Gastrocnemius medialis (tissue), 4 donors: ENCODE measurements at regions of chrX and their contacts with region 1.

Region 1: GRCh38 chrX:87873347-87873941 is 355.8 kb downstream of the KLHL4 start:
- DNase-seq: no peak
- ATAC-seq: no peak
- H3K4me3 ChIP-seq: no peak overlapping the region
- H3K27ac ChIP-seq: no peak overlapping the region
- H3K4me1 ChIP-seq: no peaks in the 10 kb centered on the region
- H3K27me3 ChIP-seq: no peaks in the 10 kb centered on the region
- CTCF ChIP-seq: no peak
- POLR2A ChIP-seq: no peak

Region 2: DNA sequence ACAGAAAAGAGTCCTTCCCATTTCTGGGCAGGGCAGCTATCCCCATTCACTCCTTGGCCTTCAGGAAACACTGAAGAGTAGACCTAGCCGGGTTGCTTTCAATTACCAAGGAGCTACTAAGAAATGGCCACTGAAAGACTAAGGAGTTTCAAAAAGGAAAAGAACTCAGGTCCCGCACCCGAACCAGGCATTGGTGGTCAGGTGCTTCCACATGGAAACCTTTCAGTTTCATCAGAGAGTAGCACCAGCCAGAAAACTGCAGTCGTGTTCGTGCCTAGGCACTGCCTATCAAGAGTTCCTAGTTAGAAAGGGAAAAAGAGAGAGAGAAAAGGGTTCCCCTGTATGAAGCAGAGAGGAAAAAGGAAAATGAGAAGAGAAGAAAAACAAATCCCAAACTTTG is 118.0 kb before region 1 on chrX:
- in situ Hi-C with region 1: loop called in 1 of 4 experiments (anchors 25 kb)
- intact Hi-C with region 1: no loop called
- DNase-seq: no peak
- ATAC-seq: no peak
- H3K4me3 ChIP-seq: no peak overlapping the region
- H3K27ac ChIP-seq: no peak overlapping the region
- H3K4me1 ChIP-seq: no peaks in the 10 kb centered on the region
- H3K27me3 ChIP-seq: no peaks in the 10 kb centered on the region
- CTCF ChIP-seq: no peak
- POLR2A ChIP-seq: no peak